Heart left ventricle (tissue), 16 donors: ENCODE measurements at regions of chr2 and their contacts with region 1.

Region 1: GRCh38 chr2:164620873-164621626 is at the start of gene GRB14:
- DNase-seq: peak; percentile 23 to 73 (median 46)
- ATAC-seq: peak; percentile 87 to 93 (median 92)
- H3K4me3 ChIP-seq: peak within 1 kb of the TSS; percentile 45 to 84 (median 68)
- H3K27ac ChIP-seq: peak within 1 kb of the TSS in 7 of 12 donors; percentile 23 to 79 (median 60)
- H3K4me1 ChIP-seq: peaks cover 0 to 11% (median 0%) of the 10 kb centered on the region in 12 donors
- H3K27me3 ChIP-seq: peaks cover 0 to 24% (median 0%) of the 10 kb centered on the region in 9 donors
- CTCF ChIP-seq: peak in 2 of 12 donors; percentile 8 to 16
- POLR2A ChIP-seq: no peak
- total RNA-seq, gene GRB14: 2.7 to 22.9 (median 13.3) TPM

Region 2: GRCh38 chr2:164717000-164717803 is 96.2 kb after region 1 on chr2:
- intact Hi-C with region 1: loop called in 1 of 10 experiments (anchors 5 kb)
- DNase-seq: no peak
- ATAC-seq: no peak
- H3K4me3 ChIP-seq: no peak overlapping the region
- H3K27ac ChIP-seq: no peak overlapping the region
- H3K4me1 ChIP-seq: peaks cover 0 to 20% (median 3%) of the 10 kb centered on the region in 12 donors
- H3K27me3 ChIP-seq: no peaks in the 10 kb centered on the region
- CTCF ChIP-seq: peak; percentile 43 to 72 (median 62)
- POLR2A ChIP-seq: no peak

Region 3: GRCh38 chr2:164948540-164948939 is 327.5 kb after region 1 on chr2:
- intact Hi-C with region 1: no loop called
- DNase-seq: no peak
- ATAC-seq: no peak
- H3K4me3 ChIP-seq: no peak overlapping the region
- H3K27ac ChIP-seq: no peak overlapping the region
- H3K4me1 ChIP-seq: no peaks in the 10 kb centered on the region
- H3K27me3 ChIP-seq: peaks cover 0 to 14% (median 4%) of the 10 kb centered on the region in 9 donors
- CTCF ChIP-seq: no peak
- POLR2A ChIP-seq: no peak